Heart right ventricle (tissue), 16 donors: ENCODE measurements at regions of chr3 and their contacts with region 1.

Region 1: GRCh38 chr3:18544146-18544545 is 119.0 kb upstream of the SATB1 start:
- DNase-seq: no peak
- ATAC-seq: no peak
- H3K4me3 ChIP-seq: no peak overlapping the region
- H3K27ac ChIP-seq: no peak overlapping the region
- H3K4me1 ChIP-seq: no peaks in the 10 kb centered on the region
- H3K27me3 ChIP-seq: no peaks in the 10 kb centered on the region
- CTCF ChIP-seq: no peak

Region 2: DNA sequence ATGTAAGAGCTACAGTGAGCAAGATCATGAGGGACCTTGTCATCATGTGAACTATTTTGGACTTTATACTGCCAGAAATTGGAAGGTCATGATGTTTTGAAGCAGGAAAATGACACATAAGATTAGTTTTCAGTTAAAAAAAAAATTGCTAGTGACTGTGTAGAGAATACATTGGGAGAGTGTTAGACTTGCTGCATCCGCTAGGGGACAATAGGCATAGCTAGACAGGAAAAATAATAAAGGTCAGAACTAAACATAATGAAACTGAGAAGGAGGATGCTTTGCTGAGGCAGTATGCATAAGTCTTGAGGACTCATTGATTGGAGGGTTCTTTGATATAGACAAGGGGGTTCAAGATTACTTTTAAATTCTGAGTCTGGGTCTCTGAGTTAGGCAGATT is 328.3 kb after region 1 on chr3:
- intact Hi-C with region 1: no loop called
- DNase-seq: no peak
- ATAC-seq: no peak
- H3K4me3 ChIP-seq: no peak overlapping the region
- H3K27ac ChIP-seq: no peak overlapping the region
- H3K4me1 ChIP-seq: no peaks in the 10 kb centered on the region
- H3K27me3 ChIP-seq: no peaks in the 10 kb centered on the region
- CTCF ChIP-seq: no peak

Region 3: GRCh38 chr3:20302766-20303165 is 1758.6 kb after region 1 on chr3:
- intact Hi-C with region 1: loop called in 1 of 10 experiments (anchors 5 kb)
- DNase-seq: no peak
- ATAC-seq: no peak
- H3K4me3 ChIP-seq: no peak overlapping the region
- H3K27ac ChIP-seq: no peak overlapping the region
- H3K4me1 ChIP-seq: no peaks in the 10 kb centered on the region
- H3K27me3 ChIP-seq: no peaks in the 10 kb centered on the region
- CTCF ChIP-seq: no peak